Calu3 (cell line): ENCODE measurements at regions of chr6 and their contacts with region 1.

Region 1: DNA sequence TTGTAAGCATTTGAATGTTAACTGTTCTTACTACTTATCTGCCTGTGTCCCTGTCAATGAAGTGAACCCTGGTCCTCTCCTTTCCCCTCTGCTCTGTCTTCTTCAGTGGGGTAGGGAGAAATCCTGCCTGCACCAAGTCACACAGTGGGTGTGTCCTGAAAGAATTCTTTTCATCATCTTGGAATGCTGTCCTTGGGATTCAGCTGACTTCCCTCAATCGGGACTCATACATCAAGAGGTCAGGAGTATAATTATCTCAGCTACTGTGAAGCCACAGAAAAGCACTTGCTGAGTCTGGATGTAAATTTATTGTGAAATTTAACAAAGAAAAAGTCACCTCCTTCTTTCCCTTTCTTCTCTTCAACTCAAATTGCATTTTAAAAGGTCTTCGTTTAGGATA is 328.5 kb downstream of the SOX4 start:
- DNase-seq: no peak
- H3K4me3 Mint-ChIP-seq: no peak overlapping the region
- H3K27ac Mint-ChIP-seq: no peak overlapping the region
- H3K4me1 Mint-ChIP-seq: peaks cover 52% of the 10 kb centered on the region
- H3K27me3 Mint-ChIP-seq: no peaks in the 10 kb centered on the region
- CTCF ChIP-seq: no peak

Region 2: GRCh38 chr6:21885532-21886114 is 36.5 kb before region 1 on chr6:
- CTCF ChIA-PET with region 1: interaction called, 3 read pairs
- intact Hi-C with region 1: loop called (anchors 2 kb)
- DNase-seq: peak; percentile 86
- H3K4me3 Mint-ChIP-seq: no peak overlapping the region
- H3K27ac Mint-ChIP-seq: no peak overlapping the region
- H3K4me1 Mint-ChIP-seq: peaks cover 10% of the 10 kb centered on the region
- H3K27me3 Mint-ChIP-seq: no peaks in the 10 kb centered on the region
- CTCF ChIP-seq: no peak

Region 3: DNA sequence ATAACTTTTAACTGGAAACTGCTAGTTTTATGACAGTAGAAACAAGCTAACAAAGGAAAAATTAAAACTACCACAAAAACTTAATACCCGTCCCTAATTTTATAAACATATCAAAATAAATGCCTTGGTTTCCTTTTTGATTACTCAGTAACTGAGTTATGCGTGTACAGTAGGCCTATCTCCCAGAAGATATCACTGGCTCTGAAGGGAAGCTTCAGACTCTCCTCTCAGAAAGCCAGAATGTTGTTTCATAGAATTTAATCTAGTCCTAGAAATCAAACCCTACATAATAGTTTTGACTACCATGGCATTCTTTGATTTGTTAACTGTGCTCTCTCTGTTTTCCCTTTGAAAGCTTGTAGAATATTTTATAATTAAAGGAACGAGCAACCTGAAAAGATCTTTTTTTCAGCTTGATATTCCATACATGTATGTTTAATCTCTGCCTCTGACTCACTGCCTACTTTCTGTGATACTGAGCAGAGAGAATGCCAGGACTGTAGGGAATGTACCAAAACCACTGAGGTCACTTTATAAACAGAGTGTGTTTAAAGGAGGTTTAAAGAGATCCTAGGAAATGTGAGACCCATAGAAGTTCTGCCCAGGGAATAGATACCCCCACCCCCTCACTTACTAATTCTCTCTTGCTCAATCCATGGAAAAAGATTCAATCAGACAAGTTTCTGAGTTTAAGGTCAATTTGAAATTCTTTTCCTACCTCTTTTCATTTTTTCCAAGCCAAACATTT is 958.8 kb after region 1 on chr6:
- CTCF ChIA-PET with region 1: no interaction called
- intact Hi-C with region 1: loop called (anchors 10 kb)
- DNase-seq: peak; percentile 51
- H3K4me3 Mint-ChIP-seq: peak overlapping the region; percentile 24
- H3K27ac Mint-ChIP-seq: peak overlapping the region; percentile 95
- H3K4me1 Mint-ChIP-seq: peaks cover 61% of the 10 kb centered on the region
- H3K27me3 Mint-ChIP-seq: no peaks in the 10 kb centered on the region
- CTCF ChIP-seq: no peak